Colonic mucosa (tissue), 4 donors: ENCODE measurements at regions of chr17 and their contacts with region 1.

Region 1: DNA sequence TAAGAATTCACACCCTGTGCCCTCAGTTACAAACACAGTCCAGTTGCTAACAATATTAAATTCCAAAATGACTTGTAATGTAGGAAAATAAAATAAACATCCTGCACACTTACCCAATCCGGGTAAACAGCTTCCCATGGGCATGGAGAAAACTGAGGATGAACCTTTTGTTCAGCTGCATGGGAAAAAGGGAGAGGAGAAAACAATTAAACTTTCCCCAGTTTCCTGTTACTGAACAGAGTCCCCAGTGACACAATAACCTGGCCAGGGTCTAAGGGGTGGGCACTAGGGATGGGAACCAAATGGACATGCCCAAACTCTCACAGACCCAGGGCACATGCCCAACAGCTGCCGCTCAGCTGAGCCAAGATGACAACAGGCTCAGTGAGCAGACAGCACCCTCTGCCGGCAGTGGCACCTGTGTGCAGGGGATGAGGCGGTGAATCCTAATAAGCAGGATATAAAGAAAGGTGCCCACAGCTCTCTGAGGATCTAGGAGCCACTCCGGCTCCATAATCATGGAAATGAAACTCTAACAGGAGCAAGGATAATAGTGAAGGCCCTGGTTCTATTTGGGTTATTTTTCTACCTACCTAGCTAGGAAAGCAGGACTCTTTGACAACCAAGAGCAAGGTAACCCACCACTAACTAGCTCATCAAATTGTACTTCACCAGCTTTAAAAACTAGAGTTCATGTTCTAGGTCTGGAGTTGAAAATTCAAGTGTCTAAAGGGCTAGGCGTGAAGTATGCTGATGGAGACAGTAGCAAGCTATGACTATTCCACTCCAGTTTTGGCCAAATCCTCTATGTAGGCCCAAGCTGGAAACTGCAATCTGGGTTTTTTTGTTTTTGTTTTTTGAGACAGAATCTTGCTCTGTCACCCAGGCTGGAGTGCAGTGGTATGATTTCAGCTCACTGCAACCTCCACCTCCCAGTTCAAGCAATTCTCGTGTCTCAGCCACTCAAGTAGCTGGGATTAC is 58.8 kb downstream of the SMG6 start:
- DNase-seq: peak; percentile 85
- H3K4me3 ChIP-seq: no peak overlapping the region
- H3K27ac ChIP-seq: peak overlapping the region; percentile 5
- H3K4me1 ChIP-seq: no peaks in the 10 kb centered on the region
- H3K27me3 ChIP-seq: no peaks in the 10 kb centered on the region
- CTCF ChIP-seq: peak; percentile 93

Region 2: DNA sequence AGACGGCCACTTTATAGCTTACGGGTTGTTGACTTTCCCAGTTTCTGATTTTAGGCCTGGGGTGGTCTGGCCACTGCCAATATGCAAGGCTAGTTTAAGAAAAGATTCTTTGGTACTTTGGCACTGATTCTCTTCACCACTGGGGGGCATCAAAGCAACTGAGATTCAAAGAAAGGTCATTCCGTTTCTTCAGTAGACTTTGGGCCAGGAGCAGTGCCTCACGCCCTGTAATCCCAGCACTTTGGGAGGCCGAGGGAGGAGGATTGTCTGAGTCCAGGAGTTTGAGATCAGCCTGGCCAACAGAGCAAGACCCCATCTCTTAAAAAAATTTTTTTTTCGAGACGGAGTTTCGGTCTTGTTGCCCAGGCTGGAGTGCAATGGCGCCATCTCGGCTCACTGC is 362.0 kb before region 1 on chr17:
- intact Hi-C with region 1: loop called (anchors 10 kb)
- DNase-seq: peak; percentile 32
- H3K4me3 ChIP-seq: no peak overlapping the region
- H3K27ac ChIP-seq: no peak overlapping the region
- H3K4me1 ChIP-seq: no peaks in the 10 kb centered on the region
- H3K27me3 ChIP-seq: no peaks in the 10 kb centered on the region
- CTCF ChIP-seq: peak; percentile 48

Region 3: GRCh38 chr17:2179615-2180295 is 65.1 kb before region 1 on chr17:
- intact Hi-C with region 1: no loop called
- DNase-seq: peak; percentile 78
- H3K4me3 ChIP-seq: no peak overlapping the region
- H3K27ac ChIP-seq: peak overlapping the region; percentile 55
- H3K4me1 ChIP-seq: no peaks in the 10 kb centered on the region
- H3K27me3 ChIP-seq: no peaks in the 10 kb centered on the region
- CTCF ChIP-seq: no peak